ENCODE measurements at regions of chr12 and their contacts with region 1.

Region 1: DNA sequence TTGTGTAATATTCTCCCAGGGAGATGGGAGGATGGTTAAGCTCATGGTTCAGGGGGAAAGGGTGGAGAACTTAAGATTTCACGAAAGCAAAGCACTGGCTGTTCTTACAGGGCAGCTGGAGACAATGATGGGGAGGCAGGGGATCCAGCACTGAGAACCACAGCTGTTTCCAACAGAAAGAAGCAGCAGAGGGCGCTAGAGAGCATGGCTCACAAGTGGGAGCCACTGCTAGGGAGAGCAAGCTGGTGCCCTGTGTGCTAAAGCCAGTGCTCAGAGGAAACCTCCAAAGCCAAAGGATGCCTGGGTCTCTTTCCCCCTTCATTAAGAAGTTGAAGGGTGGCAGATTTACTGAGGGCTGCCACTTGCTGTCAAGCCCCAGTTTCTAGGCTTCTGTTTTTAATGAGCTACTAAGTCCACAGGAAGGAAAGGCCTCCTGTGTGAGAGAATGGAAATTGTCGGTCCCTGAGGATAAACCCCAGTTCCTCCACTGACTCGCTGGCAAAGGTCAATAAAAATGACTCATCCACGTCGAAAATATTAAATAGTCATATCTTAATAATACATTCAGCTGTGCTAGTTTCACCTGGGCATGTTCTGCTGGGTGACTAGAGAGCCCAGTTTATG is 199.7 kb downstream of the ANO2 start:
- DNase-seq: peak; percentile 51 to 65
- ATAC-seq: peak; percentile 87 to 97; a peak in 5 of 6 replicates
- H3K4me3 ChIP-seq: no peak overlapping the region
- H3K27ac ChIP-seq: no peak overlapping the region
- H3K4me1 ChIP-seq: no peaks in the 10 kb centered on the region
- CTCF ChIP-seq: peak; percentile 44; the same call in 2 of the 3 replicates
- EP300 ChIP-seq: no peak
- POLR2A ChIP-seq: no peak
- RAD21 ChIP-seq: peak in 1 of 2 experiments; percentile 49; a peak in 2 of 5 replicates

Region 2: DNA sequence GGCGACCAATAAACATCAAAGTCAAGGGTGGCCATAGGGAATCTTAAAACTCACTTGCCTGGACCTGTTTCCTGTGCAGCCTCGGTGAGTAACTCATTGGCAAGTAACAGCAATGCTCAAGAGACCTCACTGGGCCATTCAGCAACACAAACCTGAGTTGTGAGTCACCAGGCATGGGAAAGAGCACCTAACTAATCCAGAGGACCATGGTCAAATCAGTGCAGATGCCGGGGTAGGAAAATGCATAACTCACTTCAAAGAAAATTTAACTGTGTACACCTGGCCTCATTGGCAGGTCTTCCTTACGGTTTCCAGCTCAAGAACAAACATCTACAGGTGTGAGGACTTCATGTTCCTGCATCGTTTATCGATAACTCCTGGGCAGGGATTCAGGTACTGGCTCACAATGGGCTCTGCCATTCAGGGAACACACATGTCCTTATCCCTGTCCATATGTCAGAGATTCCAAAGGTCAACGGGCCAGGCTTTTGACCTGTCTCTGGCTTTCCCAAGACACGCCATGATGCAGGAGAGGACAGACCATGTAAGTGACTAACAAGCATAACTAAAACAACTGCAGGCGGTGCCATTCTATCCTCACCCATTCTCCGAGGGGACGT is 12.1 kb before region 1 on chr12:
- CTCF ChIA-PET with region 1: interaction called, 19 read pairs
- POLR2A ChIA-PET with region 1: no interaction called
- DNase-seq: no peak
- ATAC-seq: no peak
- H3K4me3 ChIP-seq: no peak overlapping the region
- H3K27ac ChIP-seq: no peak overlapping the region
- H3K4me1 ChIP-seq: no peaks in the 10 kb centered on the region
- CTCF ChIP-seq: no peak
- EP300 ChIP-seq: no peak
- POLR2A ChIP-seq: no peak
- RAD21 ChIP-seq: no peak

Region 3: GRCh38 chr12:5944033-5944432 is 198.7 kb after region 1 on chr12:
- CTCF ChIA-PET with region 1: no interaction called
- POLR2A ChIA-PET with region 1: no interaction called
- DNase-seq: no peak
- ATAC-seq: no peak
- H3K4me3 ChIP-seq: no peak overlapping the region; the same call in 2 of the 3 replicates
- H3K27ac ChIP-seq: no peak overlapping the region
- H3K4me1 ChIP-seq: no peaks in the 10 kb centered on the region
- CTCF ChIP-seq: no peak
- EP300 ChIP-seq: no peak
- POLR2A ChIP-seq: no peak
- RAD21 ChIP-seq: no peak

Measured in A549 (cell line).